ENCODE measurements at regions of chr2 and their contacts with region 1.

Region 1: GRCh38 chr2:219177552-219178376 is at the start of gene RETREG2:
- DNase-seq: peak; percentile 79
- H3K4me3 Mint-ChIP-seq: peak within 1 kb of the TSS; percentile 94
- H3K27ac Mint-ChIP-seq: peak within 1 kb of the TSS; percentile 98
- H3K4me1 Mint-ChIP-seq: peaks cover 38% of the 10 kb centered on the region
- H3K27me3 Mint-ChIP-seq: no peaks in the 10 kb centered on the region
- total RNA-seq, gene RETREG2: 52.5 and 57.4 TPM in 2 replicates

Region 2: GRCh38 chr2:218898109-218898878 is 279.5 kb before region 1 on chr2:
- intact Hi-C with region 1: loop called (anchors 2 kb)
- DNase-seq: peak; percentile 74
- H3K4me3 Mint-ChIP-seq: peak overlapping the region; percentile 68
- H3K27ac Mint-ChIP-seq: peak overlapping the region; percentile 68
- H3K4me1 Mint-ChIP-seq: peaks cover 33% of the 10 kb centered on the region
- H3K27me3 Mint-ChIP-seq: peaks cover 47% of the 10 kb centered on the region

Region 3: GRCh38 chr2:218915021-218915420 is 262.7 kb before region 1 on chr2:
- intact Hi-C with region 1: no loop called
- DNase-seq: no peak
- H3K4me3 Mint-ChIP-seq: no peak overlapping the region
- H3K27ac Mint-ChIP-seq: no peak overlapping the region
- H3K4me1 Mint-ChIP-seq: peaks cover 3% of the 10 kb centered on the region
- H3K27me3 Mint-ChIP-seq: peaks cover 9% of the 10 kb centered on the region

Region 4: DNA sequence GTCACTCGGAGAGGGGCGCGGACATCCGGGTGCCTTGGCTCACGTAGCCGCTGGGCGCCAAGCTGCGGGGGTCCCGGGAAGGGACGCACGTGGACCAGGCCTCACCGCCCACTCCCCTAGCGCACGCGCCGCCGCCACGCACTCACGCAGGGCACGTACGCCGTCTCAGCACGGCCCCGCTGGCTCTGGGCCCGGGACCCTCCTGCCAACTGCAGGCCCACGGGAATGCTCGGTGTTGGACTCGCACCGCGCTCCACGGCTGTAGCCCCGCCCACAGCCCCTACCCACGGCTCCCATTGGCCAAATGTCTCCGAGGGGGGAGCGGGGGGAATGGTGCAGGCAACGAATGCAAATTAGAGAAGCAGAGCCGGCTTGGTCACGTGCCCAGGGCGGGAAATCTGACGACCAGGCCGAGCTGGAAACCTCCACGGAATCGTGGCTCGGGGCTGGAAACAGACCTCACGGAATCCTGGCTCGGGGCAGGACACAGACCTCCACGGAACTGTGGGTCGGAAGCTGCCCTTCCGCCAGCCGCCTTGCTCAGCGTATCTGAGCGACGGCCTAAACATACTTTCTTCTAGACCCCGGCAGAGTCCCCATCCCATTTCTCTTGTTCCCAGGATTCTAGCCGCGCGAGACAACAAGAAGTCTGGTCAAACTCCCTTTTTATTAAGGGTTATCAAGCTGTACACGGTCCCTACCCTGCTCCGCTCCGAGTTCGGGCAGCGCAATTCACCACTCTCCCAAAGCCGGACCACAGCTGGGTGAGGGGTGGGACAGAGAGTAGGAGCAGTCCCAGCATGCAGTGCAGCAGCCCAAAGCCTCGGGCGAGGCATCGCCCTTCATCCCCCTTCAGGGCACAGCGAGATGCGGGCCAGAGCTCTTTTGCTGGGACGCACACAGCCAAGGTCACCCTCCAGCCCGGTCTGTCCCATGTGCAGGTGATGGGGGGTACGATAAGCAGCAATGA is 41.3 kb after region 1 on chr2 and contains the start of gene ABCB6:
- intact Hi-C with region 1: loop called (anchors 2 kb)
- DNase-seq: peak; percentile 81
- H3K4me3 Mint-ChIP-seq: peak within 1 kb of the TSS; percentile 82
- H3K27ac Mint-ChIP-seq: peak within 1 kb of the TSS; percentile 55
- H3K4me1 Mint-ChIP-seq: peaks cover 22% of the 10 kb centered on the region
- H3K27me3 Mint-ChIP-seq: no peaks in the 10 kb centered on the region
- total RNA-seq, gene ABCB6: 22.1 and 25.4 TPM in 2 replicates

Region 5: DNA sequence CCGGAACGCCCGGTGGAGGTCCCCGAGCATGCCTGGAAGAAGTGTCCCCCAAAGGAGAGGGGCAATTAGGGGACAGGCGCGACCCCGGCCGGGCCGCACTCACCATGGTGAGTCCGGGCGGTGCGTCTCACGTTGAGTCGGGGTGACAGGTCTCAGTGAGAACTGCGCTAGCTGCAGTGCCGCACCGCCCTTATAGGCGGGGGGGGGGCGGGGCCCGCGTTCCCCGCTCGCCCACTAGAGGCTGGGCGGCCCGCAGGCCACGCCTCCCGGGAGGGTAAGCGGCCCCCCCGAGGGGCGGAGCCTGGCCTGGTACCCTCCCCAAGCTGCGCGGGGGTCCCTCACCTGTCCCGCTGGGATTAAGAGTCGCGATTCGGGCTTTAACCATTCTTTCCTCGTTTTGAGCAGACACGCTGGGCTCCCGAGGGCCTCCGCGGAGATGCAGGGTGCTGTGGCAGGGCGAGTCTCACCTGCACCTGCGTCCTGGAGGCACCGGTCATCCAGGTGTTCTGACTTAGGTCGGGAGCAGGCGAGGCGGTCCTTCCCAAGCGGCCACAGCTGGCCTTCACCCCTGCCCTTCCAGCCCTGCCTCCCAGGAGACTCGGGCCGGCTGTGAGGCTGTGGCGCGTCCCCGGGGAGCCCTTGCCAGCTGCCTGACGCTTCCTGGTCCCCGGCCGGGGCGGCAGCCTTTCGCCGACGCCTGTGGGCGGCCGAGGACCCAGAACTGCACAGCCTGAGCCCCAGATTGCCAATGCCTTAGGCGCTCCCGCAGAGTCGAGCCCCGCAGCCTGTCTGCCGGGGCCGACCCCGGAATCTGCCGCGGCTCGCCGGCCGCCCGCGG is 76.2 kb after region 1 on chr2 and contains the start of gene TUBA4A:
- intact Hi-C with region 1: loop called (anchors 1 kb)
- DNase-seq: peak; percentile 84
- H3K4me3 Mint-ChIP-seq: peak within 1 kb of the TSS; percentile 77
- H3K27ac Mint-ChIP-seq: peak within 1 kb of the TSS; percentile 92
- H3K4me1 Mint-ChIP-seq: peaks cover 46% of the 10 kb centered on the region
- H3K27me3 Mint-ChIP-seq: no peaks in the 10 kb centered on the region
- total RNA-seq, gene TUBA4A: 220 and 231 TPM in 2 replicates

Region 6: GRCh38 chr2:219388127-219388844 is 210.5 kb after region 1 on chr2:
- intact Hi-C with region 1: loop called (anchors 2 kb)
- DNase-seq: peak; percentile 96
- H3K4me3 Mint-ChIP-seq: peak overlapping the region; percentile 65
- H3K27ac Mint-ChIP-seq: peak overlapping the region; percentile 75
- H3K4me1 Mint-ChIP-seq: peaks cover 7% of the 10 kb centered on the region
- H3K27me3 Mint-ChIP-seq: peaks cover 8% of the 10 kb centered on the region